ENCODE measurements at regions of chr5 and their contacts with region 1.

Region 1: GRCh38 chr5:57408714-57409113 is 73.9 kb downstream of the ACTBL2 start:
- DNase-seq: no peak
- H3K4me3 ChIP-seq: no peak overlapping the region
- H3K27ac ChIP-seq: peak overlapping the region in 1 of 2 donors; percentile 71
- H3K4me1 ChIP-seq: peaks cover 20% of the 10 kb centered on the region
- H3K27me3 ChIP-seq: no peaks in the 10 kb centered on the region
- CTCF ChIP-seq: no peak
- EP300 ChIP-seq: no peak
- POLR2A ChIP-seq: no peak

Region 2: DNA sequence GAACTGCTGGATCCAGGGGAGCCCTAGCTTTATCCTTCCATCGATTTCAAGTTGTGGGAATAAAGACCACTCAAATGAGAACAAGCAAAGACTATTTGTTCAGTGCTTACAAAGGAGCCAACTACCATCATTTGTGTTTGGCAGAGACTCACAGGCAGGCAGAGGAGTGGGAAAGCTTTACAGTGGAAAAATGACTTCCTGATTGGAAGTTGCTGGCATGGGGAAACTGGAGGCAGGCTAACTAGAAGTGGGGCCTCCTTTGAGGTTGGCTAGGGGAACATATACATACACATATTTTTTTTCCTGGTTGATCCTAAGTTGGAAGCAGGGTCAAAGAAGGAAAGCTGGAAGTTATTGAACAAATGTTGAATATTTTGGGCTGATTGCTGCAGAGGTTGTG is 47.8 kb before region 1 on chr5:
- intact Hi-C with region 1: no loop called
- DNase-seq: no peak
- H3K4me3 ChIP-seq: no peak overlapping the region
- H3K27ac ChIP-seq: no peak overlapping the region
- H3K4me1 ChIP-seq: no peaks in the 10 kb centered on the region
- H3K27me3 ChIP-seq: no peaks in the 10 kb centered on the region
- CTCF ChIP-seq: no peak
- EP300 ChIP-seq: no peak
- POLR2A ChIP-seq: no peak

Region 3: GRCh38 chr5:57450991-57451876 is 42.5 kb after region 1 on chr5:
- intact Hi-C with region 1: loop called in 1 of 4 experiments (anchors 10 kb)
- DNase-seq: no peak
- H3K4me3 ChIP-seq: no peak overlapping the region
- H3K27ac ChIP-seq: no peak overlapping the region
- H3K4me1 ChIP-seq: peaks cover 22% of the 10 kb centered on the region
- H3K27me3 ChIP-seq: no peaks in the 10 kb centered on the region
- CTCF ChIP-seq: no peak
- EP300 ChIP-seq: no peak
- POLR2A ChIP-seq: no peak

Region 4: DNA sequence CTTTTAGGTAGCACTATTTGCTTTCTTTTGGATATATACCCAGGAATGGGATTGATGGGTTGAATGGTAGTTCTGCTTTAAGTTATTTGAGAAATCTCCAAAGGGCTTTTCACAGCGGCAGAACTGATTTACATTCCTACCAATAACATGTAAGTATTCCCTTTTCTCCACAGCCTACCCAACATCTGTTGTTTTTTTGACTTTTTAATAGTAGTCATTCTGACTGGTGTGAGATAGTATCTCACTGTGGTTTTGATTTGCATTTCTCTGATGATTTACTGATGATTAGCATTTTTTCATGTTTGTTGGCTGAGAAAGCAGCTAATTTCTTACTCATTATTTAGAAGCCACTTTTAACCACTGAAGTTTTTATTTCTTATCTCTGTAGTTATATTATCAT is 295.0 kb after region 1 on chr5:
- intact Hi-C with region 1: no loop called
- DNase-seq: no peak
- H3K4me3 ChIP-seq: no peak overlapping the region
- H3K27ac ChIP-seq: no peak overlapping the region
- H3K4me1 ChIP-seq: peaks cover 2% of the 10 kb centered on the region
- H3K27me3 ChIP-seq: no peaks in the 10 kb centered on the region
- CTCF ChIP-seq: no peak
- EP300 ChIP-seq: no peak
- POLR2A ChIP-seq: no peak

Measured in ovary (tissue), 10 donors.